Ascending aorta (tissue), 2 donors: ENCODE measurements at regions of chr21 and their contacts with region 1.

Region 1: DNA sequence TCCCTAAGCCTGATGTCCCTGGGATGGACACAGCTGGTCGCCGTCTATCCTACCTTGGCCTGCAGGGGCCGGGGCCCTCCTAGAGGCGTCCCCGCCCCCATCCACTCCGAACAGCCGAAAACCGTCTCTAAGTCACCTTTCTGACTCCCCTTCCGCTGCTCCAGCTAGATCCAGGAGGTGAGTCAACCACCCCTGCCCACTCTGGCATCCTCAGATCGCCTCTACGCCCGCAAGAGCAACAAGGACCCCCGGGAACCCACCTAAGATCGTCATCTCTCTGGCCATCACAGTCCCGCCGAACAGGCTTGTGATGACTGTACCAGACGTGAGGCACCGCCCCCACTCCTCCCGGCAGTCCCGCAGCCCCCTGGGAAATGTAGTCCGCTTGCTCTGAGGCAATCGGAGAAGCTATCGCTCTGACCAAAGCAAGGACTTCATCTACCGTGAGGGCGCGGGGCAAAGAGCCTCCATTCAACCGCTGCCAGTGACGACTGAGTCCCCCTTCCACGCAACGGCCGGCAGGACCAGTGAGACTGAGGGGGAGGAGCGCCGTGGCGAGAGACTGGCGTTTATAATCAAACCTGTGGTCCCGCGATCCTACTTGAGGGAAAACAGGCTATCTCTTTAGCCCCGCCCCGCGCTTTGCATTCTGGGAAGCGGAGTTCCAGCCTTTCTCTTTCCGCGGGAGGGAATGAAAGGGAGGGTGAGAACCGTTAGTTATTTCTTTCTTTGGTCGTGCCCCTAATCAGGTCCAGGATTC is at the start of gene HSPA13:
- DNase-seq: peak; percentile 100
- H3K4me3 ChIP-seq: peak within 1 kb of the TSS; percentile 83 to 92
- H3K27ac ChIP-seq: peak within 1 kb of the TSS; percentile 87 to 95
- H3K4me1 ChIP-seq: peaks cover 0 to 9% of the 10 kb centered on the region in 2 donors
- H3K27me3 ChIP-seq: no peaks in the 10 kb centered on the region
- CTCF ChIP-seq: no peak
- total RNA-seq, gene HSPA13: 14.8 TPM

Region 2: DNA sequence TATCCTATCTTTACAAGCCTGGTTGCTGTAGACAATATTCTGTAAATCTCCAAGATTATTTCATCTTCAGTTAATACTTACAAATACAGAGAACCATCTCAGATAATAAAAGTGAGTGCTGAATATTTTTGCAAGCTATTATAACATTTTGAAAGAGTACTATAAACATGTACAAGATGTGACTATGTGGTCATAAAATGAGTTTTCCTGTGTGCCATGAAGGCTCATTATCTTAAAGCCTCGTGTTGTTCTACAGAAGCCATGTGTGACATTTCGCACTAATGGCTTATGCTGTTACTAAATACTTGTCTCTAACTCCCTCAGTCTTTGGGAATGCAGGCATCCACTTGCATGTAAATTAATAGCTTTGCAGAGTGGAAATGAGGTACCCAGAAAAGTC is 114.8 kb after region 1 on chr21:
- intact Hi-C with region 1: no loop called
- DNase-seq: no peak
- H3K4me3 ChIP-seq: no peak overlapping the region
- H3K27ac ChIP-seq: no peak overlapping the region
- H3K4me1 ChIP-seq: no peaks in the 10 kb centered on the region
- H3K27me3 ChIP-seq: no peaks in the 10 kb centered on the region
- CTCF ChIP-seq: no peak

Region 3: GRCh38 chr21:15841856-15842564 is 1459.0 kb after region 1 on chr21:
- intact Hi-C with region 1: loop called (anchors 10 kb)
- DNase-seq: no peak
- H3K4me3 ChIP-seq: no peak overlapping the region
- H3K27ac ChIP-seq: no peak overlapping the region
- H3K4me1 ChIP-seq: no peaks in the 10 kb centered on the region
- H3K27me3 ChIP-seq: no peaks in the 10 kb centered on the region
- CTCF ChIP-seq: no peak